ENCODE measurements at regions of chr1 and their contacts with region 1.

Region 1: GRCh38 chr1:19485362-19486187 is at the start of gene CAPZB:
- DNase-seq: peak; percentile 95
- H3K4me3 Mint-ChIP-seq: peak within 1 kb of the TSS; percentile 96
- H3K27ac Mint-ChIP-seq: peak within 1 kb of the TSS; percentile 94
- H3K4me1 Mint-ChIP-seq: peaks cover 54% of the 10 kb centered on the region
- H3K27me3 Mint-ChIP-seq: no peaks in the 10 kb centered on the region
- total RNA-seq, gene CAPZB: 388 to 419 TPM

Region 2: GRCh38 chr1:19273106-19273843 is 212.3 kb before region 1 on chr1:
- CTCF ChIA-PET with region 1: no interaction called
- POLR2A ChIA-PET with region 1: no interaction called
- intact Hi-C with region 1: no loop called
- DNase-seq: no peak
- H3K4me3 Mint-ChIP-seq: no peak overlapping the region
- H3K27ac Mint-ChIP-seq: no peak overlapping the region
- H3K4me1 Mint-ChIP-seq: peaks cover 3% of the 10 kb centered on the region
- H3K27me3 Mint-ChIP-seq: peaks cover 15% of the 10 kb centered on the region

Region 3: GRCh38 chr1:19390901-19391595 is 94.5 kb before region 1 on chr1:
- CTCF ChIA-PET with region 1: interaction called, 5 read pairs
- POLR2A ChIA-PET with region 1: no interaction called
- intact Hi-C with region 1: loop called (anchors 2 kb)
- DNase-seq: peak; percentile 69
- H3K4me3 Mint-ChIP-seq: peak overlapping the region; percentile 76
- H3K27ac Mint-ChIP-seq: peak overlapping the region; percentile 94
- H3K4me1 Mint-ChIP-seq: peaks cover 76% of the 10 kb centered on the region
- H3K27me3 Mint-ChIP-seq: no peaks in the 10 kb centered on the region

Region 4: GRCh38 chr1:19460535-19461219 is 24.9 kb before region 1 on chr1:
- CTCF ChIA-PET with region 1: interaction called, 12 read pairs
- POLR2A ChIA-PET with region 1: interaction called, 3 read pairs
- intact Hi-C with region 1: loop called (anchors 1 kb)
- DNase-seq: peak; percentile 59
- H3K4me3 Mint-ChIP-seq: no peak overlapping the region
- H3K27ac Mint-ChIP-seq: peak overlapping the region; percentile 78
- H3K4me1 Mint-ChIP-seq: peaks cover 90% of the 10 kb centered on the region
- H3K27me3 Mint-ChIP-seq: no peaks in the 10 kb centered on the region

Region 5: GRCh38 chr1:19495799-19496624 is 10.4 kb after region 1 on chr1:
- CTCF ChIA-PET with region 1: interaction called, 14 read pairs
- POLR2A ChIA-PET with region 1: no interaction called
- intact Hi-C with region 1: no loop called
- DNase-seq: no peak
- H3K4me3 Mint-ChIP-seq: no peak overlapping the region
- H3K27ac Mint-ChIP-seq: peak overlapping the region; percentile 53
- H3K4me1 Mint-ChIP-seq: peaks cover 27% of the 10 kb centered on the region
- H3K27me3 Mint-ChIP-seq: no peaks in the 10 kb centered on the region

Region 6: GRCh38 chr1:19533626-19534025 is 48.1 kb after region 1 on chr1:
- CTCF ChIA-PET with region 1: no interaction called
- POLR2A ChIA-PET with region 1: no interaction called
- intact Hi-C with region 1: no loop called
- DNase-seq: no peak
- H3K4me3 Mint-ChIP-seq: no peak overlapping the region
- H3K27ac Mint-ChIP-seq: no peak overlapping the region
- H3K4me1 Mint-ChIP-seq: peaks cover 4% of the 10 kb centered on the region
- H3K27me3 Mint-ChIP-seq: no peaks in the 10 kb centered on the region

Region 7: DNA sequence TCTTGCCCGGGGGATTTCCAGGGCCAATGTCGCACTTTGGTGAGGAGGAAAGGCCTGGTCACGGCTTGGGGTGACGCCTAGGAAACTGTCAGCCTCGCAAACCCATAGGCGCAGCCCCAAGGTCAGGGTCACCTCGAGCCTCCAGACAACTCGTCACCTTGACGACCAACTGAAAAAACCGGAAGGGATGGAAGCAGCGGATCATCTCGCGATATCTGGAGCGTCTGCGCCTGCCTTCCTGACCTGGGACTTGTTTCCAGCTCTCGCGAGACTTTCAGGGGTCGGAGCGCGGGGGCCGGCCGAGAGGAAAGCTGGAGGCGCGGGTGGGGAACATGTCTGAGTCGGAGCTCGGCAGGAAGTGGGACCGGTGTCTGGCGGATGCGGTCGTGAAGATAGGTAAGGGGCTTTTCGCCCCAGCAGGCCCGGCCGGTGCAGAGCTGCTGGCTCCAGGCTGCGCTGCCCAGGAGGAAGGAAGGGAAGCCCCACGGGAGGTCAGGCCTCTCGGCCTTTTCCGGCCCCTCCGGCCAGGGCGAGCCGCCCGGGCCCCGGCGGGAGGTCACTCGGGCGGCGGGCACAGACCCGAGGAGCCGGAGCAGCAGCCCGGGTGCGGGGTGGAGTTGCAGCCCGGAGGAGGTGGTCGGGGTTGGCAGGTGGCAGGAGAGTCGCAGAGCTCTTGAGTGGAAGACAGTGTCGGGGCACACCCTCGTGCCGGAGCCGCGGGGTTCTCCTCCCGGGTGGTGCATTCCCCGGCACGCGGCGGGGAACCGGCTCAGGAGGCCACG is 111.3 kb after region 1 on chr1:
- CTCF ChIA-PET with region 1: interaction called, 4 read pairs
- POLR2A ChIA-PET with region 1: interaction called, 4 read pairs
- intact Hi-C with region 1: loop called (anchors 1 kb)
- DNase-seq: peak; percentile 99
- H3K4me3 Mint-ChIP-seq: peak overlapping the region; percentile 92
- H3K27ac Mint-ChIP-seq: peak overlapping the region; percentile 100
- H3K4me1 Mint-ChIP-seq: peaks cover 45% of the 10 kb centered on the region
- H3K27me3 Mint-ChIP-seq: no peaks in the 10 kb centered on the region

Measured in activated CD4-positive, alpha-beta memory T cell treated with anti-CD3 and anti-CD28 coated beads for 36 hours (primary cell).